ENCODE measurements at regions of chr10 and their contacts with region 1.

Region 1: GRCh38 chr10:6364893-6365292 is 162.2 kb downstream of the PFKFB3 start:
- DNase-seq: no peak
- H3K4me3 ChIP-seq: no peak overlapping the region
- H3K27ac ChIP-seq: no peak overlapping the region
- H3K4me1 ChIP-seq: no peaks in the 10 kb centered on the region
- CTCF ChIP-seq: no peak

Region 2: GRCh38 chr10:6228010-6228511 is 136.8 kb before region 1 on chr10:
- CTCF ChIA-PET with region 1: no interaction called
- POLR2A ChIA-PET with region 1: no interaction called
- intact Hi-C with region 1: no loop called
- DNase-seq: no peak
- H3K4me3 ChIP-seq: no peak overlapping the region
- H3K27ac ChIP-seq: no peak overlapping the region
- H3K4me1 ChIP-seq: no peaks in the 10 kb centered on the region
- CTCF ChIP-seq: no peak

Region 3: DNA sequence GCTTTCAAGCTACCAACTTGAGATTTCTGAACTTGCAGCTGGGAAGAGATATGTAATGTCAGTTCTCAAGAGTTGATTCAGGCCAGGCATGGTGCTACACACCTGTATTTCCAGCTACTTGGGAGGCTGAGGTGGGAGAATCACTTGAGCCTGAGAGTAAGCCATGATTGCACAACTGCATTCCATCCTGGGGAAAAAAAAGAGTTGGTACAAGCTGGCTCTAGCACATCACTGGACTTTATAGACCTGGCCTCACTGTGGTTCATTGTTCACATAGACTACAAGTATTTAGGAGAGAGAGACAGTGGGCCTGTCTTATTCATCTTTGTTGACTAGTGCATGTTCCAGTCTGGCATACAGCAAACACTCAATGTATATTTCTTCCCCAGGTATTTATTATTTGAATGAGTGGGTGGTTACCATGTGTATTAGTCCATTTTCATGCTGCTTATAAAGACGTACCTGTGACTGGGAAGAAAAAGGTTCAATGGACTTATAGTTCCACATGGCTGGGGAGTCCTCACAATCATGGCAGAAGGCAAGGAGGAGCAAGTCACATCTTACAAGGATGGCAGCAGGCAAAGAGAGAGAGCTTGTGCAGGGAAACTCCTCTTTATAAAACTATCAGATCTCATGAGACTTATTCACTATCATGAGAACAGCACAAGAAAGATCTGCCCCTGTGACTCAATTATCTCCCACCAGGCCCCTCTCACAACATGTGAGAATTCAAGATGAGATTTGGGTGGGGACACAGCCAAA is 14.3 kb after region 1 on chr10:
- CTCF ChIA-PET with region 1: no interaction called
- POLR2A ChIA-PET with region 1: interaction called, 19 read pairs
- intact Hi-C with region 1: no loop called
- DNase-seq: no peak
- H3K4me3 ChIP-seq: no peak overlapping the region
- H3K27ac ChIP-seq: no peak overlapping the region
- H3K4me1 ChIP-seq: peaks cover 7% of the 10 kb centered on the region
- CTCF ChIP-seq: no peak

Measured in OCI-LY7 (cell line).